ENCODE measurements at regions of chr12 and their contacts with region 1.

Region 1: DNA sequence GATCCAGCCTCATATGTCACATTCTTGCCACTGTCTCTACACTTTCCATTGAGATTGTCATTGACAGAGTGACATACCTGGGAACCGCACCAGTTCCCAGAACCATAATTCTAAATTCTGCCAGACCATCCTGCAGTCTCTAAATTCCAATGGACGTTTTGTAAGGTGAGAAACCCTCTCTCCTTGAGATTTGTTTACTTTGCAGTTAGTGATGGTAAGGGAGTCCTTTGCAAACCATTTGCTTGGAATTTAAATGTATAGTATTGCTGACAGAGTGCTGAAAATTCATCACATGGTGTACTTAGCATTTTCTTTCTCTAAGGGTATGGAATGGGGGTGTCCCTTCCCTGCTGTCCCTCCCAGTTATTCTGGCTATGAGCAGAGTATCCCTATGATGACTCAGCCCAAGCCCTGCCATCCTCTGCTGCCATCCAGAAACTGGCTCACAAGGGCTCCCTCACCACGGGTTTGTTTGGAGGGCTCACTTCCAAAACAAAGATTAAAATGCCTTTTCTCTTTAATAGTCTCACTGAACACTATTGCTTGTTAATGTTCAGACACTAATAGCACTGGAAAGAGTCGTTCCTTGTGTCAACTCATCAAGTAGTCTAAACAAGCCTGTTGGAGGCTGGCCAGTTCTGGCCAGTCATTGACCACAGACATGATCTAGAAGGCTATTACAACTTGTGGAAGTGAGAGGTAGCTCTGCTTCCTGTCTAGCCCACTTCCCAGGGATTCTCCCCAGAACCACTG is 129.0 kb upstream of the HMGA2 start:
- DNase-seq: peak; percentile 99
- ATAC-seq: peak; percentile 90
- H3K4me3 ChIP-seq: no peak overlapping the region
- H3K27ac ChIP-seq: peak overlapping the region; percentile 85
- H3K4me1 ChIP-seq: peaks cover 45% of the 10 kb centered on the region
- H3K27me3 ChIP-seq: no peaks in the 10 kb centered on the region
- CTCF ChIP-seq: no peak

Region 2: DNA sequence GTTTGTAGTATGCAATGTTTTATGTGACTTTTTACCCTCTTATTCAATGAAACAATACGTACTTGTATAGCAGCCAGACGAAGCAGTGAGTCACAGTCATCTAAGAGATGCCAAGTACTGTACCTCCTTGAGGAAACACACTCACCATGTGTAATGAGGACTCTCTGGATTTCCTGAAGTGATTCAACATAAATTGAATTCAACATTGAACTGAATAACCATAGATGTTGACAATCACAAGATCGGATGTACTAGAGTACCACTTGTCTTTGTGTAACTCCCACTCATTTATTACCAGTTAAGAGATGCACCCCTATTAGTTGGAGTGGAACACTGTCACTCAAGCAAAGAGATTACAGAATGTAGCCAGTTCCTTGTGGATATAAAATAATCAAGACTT is 46.2 kb before region 1 on chr12:
- CTCF ChIA-PET with region 1: no interaction called
- POLR2A ChIA-PET with region 1: no interaction called
- intact Hi-C with region 1: loop called (anchors 1 kb)
- DNase-seq: peak; percentile 99
- ATAC-seq: peak; percentile 90
- H3K4me3 ChIP-seq: no peak overlapping the region
- H3K27ac ChIP-seq: peak overlapping the region; percentile 98
- H3K4me1 ChIP-seq: peaks cover 44% of the 10 kb centered on the region
- H3K27me3 ChIP-seq: no peaks in the 10 kb centered on the region
- CTCF ChIP-seq: no peak

Region 3: GRCh38 chr12:65705380-65705876 is 10.1 kb after region 1 on chr12:
- CTCF ChIA-PET with region 1: no interaction called
- POLR2A ChIA-PET with region 1: no interaction called
- intact Hi-C with region 1: no loop called
- DNase-seq: no peak
- ATAC-seq: no peak
- H3K4me3 ChIP-seq: no peak overlapping the region
- H3K27ac ChIP-seq: no peak overlapping the region
- H3K4me1 ChIP-seq: no peaks in the 10 kb centered on the region
- H3K27me3 ChIP-seq: no peaks in the 10 kb centered on the region
- CTCF ChIP-seq: no peak

Region 4: DNA sequence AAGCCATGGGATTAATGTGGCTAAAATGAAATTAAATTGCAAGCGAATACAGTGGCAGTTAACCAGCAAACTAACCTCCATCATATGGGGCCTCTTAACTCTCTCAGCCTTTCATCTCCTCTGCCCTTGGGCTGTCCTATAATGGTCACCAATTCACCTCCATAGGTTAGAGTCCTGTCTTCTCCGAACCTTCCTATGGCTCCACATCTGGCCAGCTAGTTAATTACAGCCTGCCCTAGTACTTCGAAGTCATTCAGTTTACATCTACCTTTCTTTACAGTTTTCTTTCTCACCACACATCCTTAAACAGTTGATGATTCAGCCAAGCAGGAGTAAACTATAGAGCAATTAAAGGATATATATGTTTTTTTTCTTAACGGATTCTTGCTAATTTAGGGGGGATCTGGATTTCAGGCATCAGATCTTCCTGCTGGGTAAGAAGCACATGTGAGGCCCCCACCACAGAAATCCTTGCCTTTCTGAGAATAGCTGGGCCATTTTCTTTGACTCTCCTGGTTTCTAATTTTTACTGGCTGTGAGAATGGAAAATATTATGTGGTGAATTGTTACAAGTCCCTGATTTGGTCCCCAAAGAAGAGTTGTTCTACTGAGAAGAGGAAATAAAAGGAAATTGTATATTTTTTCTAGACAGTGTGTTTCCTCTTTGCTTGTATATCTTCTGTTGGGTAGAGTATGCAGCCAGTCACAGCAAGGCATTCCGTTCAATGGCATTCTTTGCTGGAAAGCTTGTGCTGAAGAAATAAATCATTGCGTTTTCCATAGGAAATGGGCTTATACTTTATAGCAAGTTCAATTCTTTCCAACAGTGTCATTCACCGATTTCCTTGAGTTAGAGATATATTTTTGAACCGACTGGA is 145.7 kb after region 1 on chr12:
- CTCF ChIA-PET with region 1: no interaction called
- POLR2A ChIA-PET with region 1: no interaction called
- intact Hi-C with region 1: no loop called
- DNase-seq: peak; percentile 35
- ATAC-seq: peak; percentile 9; the same call in 1 of the 2 replicates
- H3K4me3 ChIP-seq: no peak overlapping the region
- H3K27ac ChIP-seq: 0 out of 2 replicates have a peak overlapping the region, but pooled peaks have one; percentile 5
- H3K4me1 ChIP-seq: no peaks in the 10 kb centered on the region
- H3K27me3 ChIP-seq: no peaks in the 10 kb centered on the region
- CTCF ChIP-seq: peak; percentile 42

Measured in PC-3 (cell line).